GM12878 (cell line): ENCODE measurements at regions of chr20 and their contacts with region 1.

Region 1: GRCh38 chr20:6623989-6624388 is 143.5 kb upstream of the BMP2 start:
- DNase-seq: peak; percentile 66
- ATAC-seq: peak; percentile 96
- H3K4me3 ChIP-seq: no peak overlapping the region
- H3K27ac ChIP-seq: no peak overlapping the region
- H3K4me1 ChIP-seq: no peaks in the 10 kb centered on the region
- H3K27me3 ChIP-seq: no peaks in the 10 kb centered on the region
- CTCF ChIP-seq: no peak
- EP300 ChIP-seq: peak in 1 of 2 experiments; percentile 90; a peak in 3 of 4 replicates
- POLR2A ChIP-seq: no peak
- RAD21 ChIP-seq: no peak

Region 2: GRCh38 chr20:6575912-6576401 is 48.0 kb before region 1 on chr20:
- CTCF ChIA-PET with region 1: interaction called, 3 read pairs
- POLR2A ChIA-PET with region 1: interaction called, 6 read pairs
- RAD21 ChIA-PET with region 1: interaction called, 8 read pairs
- SMC1A ChIA-PET with region 1: interaction called, 109 read pairs
- in situ Hi-C with region 1: no loop called
- intact Hi-C with region 1: no loop called
- DNase-seq: peak; percentile 53
- ATAC-seq: peak; percentile 90
- H3K4me3 ChIP-seq: no peak overlapping the region
- H3K27ac ChIP-seq: no peak overlapping the region
- H3K4me1 ChIP-seq: no peaks in the 10 kb centered on the region
- H3K27me3 ChIP-seq: no peaks in the 10 kb centered on the region
- CTCF ChIP-seq: no peak
- EP300 ChIP-seq: peak; percentile 81 to 83; a peak in 3 of 4 replicates
- POLR2A ChIP-seq: no peak
- RAD21 ChIP-seq: no peak

Region 3: DNA sequence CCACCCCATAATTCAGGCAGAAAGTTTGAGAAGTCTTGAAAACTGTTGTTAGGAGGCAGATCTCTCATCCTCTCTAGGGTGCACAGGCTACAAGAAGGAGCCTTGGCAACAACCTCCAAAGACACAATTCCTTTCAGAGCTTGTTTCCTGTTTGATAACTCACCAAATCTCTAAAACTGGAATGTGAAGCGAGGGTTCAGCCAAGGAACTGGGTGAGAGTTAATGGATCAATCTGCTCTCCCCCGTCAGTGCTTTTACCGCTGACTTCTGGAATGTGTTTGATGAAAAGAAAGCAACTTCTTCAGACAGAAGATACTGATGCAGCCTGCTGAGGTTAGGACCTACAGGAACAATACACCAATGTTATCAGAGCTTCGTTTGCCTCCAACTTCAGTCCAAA is 28.3 kb before region 1 on chr20:
- CTCF ChIA-PET with region 1: interaction called, 20 read pairs
- POLR2A ChIA-PET with region 1: interaction called, 4 read pairs
- RAD21 ChIA-PET with region 1: interaction called, 3 read pairs
- SMC1A ChIA-PET with region 1: interaction called, 11 read pairs
- in situ Hi-C with region 1: no loop called
- intact Hi-C with region 1: loop called (anchors 2 kb)
- DNase-seq: no peak
- ATAC-seq: no peak
- H3K4me3 ChIP-seq: no peak overlapping the region
- H3K27ac ChIP-seq: no peak overlapping the region
- H3K4me1 ChIP-seq: no peaks in the 10 kb centered on the region
- H3K27me3 ChIP-seq: no peaks in the 10 kb centered on the region
- CTCF ChIP-seq: no peak
- EP300 ChIP-seq: no peak
- POLR2A ChIP-seq: no peak
- RAD21 ChIP-seq: no peak

Region 4: DNA sequence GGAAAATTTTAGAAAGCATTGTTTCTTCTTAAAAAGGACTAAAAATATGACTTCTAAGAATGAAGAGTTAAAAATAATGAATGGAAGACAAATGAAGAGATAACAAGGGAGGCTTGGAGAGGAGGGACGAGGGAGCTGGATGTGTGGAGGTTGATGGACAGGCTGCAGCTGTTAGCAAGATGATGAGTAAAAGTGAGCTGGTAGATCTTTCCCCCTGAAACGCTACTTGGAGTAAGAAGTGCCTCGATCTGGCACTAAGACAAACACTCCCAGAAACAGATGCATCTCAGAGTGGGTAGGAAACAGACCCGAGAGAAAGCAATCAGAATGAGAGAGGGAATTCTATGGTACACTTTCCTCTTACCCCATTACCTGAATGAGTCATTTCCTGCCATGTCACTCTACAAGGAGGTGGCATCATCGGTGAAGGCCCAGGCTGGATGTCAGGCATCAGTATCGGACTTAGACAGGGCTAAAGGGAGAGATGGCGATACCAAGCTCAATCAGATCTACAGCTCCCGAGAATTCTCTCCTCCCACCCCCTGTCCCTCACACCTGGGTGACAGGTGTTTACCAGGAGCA is 10.6 kb before region 1 on chr20:
- CTCF ChIA-PET with region 1: interaction called, 12 read pairs
- POLR2A ChIA-PET with region 1: interaction called, 4 read pairs
- RAD21 ChIA-PET with region 1: interaction called, 9 read pairs
- SMC1A ChIA-PET with region 1: interaction called, 44 read pairs
- in situ Hi-C with region 1: no loop called
- intact Hi-C with region 1: no loop called
- DNase-seq: no peak
- ATAC-seq: peak; percentile 92
- H3K4me3 ChIP-seq: no peak overlapping the region
- H3K27ac ChIP-seq: no peak overlapping the region
- H3K4me1 ChIP-seq: no peaks in the 10 kb centered on the region
- H3K27me3 ChIP-seq: no peaks in the 10 kb centered on the region
- CTCF ChIP-seq: no peak
- EP300 ChIP-seq: no peak
- POLR2A ChIP-seq: no peak
- RAD21 ChIP-seq: no peak